ENCODE measurements at regions of chr6 and their contacts with region 1.

Region 1: GRCh38 chr6:81759782-81760181 is 7.3 kb upstream of the TENT5A start:
- DNase-seq: no peak
- ATAC-seq: no peak
- H3K4me3 ChIP-seq: no peak overlapping the region
- H3K27ac ChIP-seq: no peak overlapping the region
- H3K4me1 ChIP-seq: no peaks in the 10 kb centered on the region
- H3K27me3 ChIP-seq: peaks cover 0 to 4% of the 10 kb centered on the region in 2 experiments; a peak in 1 of 5 replicates
- CTCF ChIP-seq: no peak
- EP300 ChIP-seq: no peak
- POLR2A ChIP-seq: no peak
- RAD21 ChIP-seq: no peak

Region 2: GRCh38 chr6:81708113-81708699 is 51.6 kb before region 1 on chr6:
- CTCF ChIA-PET with region 1: no interaction called
- POLR2A ChIA-PET with region 1: no interaction called
- in situ Hi-C with region 1: no loop called
- intact Hi-C with region 1: no loop called
- DNase-seq: no peak
- ATAC-seq: no peak
- H3K4me3 ChIP-seq: no peak overlapping the region
- H3K27ac ChIP-seq: no peak overlapping the region
- H3K4me1 ChIP-seq: no peaks in the 10 kb centered on the region
- H3K27me3 ChIP-seq: no peaks in the 10 kb centered on the region
- CTCF ChIP-seq: no peak
- EP300 ChIP-seq: no peak
- POLR2A ChIP-seq: no peak
- RAD21 ChIP-seq: no peak

Region 3: DNA sequence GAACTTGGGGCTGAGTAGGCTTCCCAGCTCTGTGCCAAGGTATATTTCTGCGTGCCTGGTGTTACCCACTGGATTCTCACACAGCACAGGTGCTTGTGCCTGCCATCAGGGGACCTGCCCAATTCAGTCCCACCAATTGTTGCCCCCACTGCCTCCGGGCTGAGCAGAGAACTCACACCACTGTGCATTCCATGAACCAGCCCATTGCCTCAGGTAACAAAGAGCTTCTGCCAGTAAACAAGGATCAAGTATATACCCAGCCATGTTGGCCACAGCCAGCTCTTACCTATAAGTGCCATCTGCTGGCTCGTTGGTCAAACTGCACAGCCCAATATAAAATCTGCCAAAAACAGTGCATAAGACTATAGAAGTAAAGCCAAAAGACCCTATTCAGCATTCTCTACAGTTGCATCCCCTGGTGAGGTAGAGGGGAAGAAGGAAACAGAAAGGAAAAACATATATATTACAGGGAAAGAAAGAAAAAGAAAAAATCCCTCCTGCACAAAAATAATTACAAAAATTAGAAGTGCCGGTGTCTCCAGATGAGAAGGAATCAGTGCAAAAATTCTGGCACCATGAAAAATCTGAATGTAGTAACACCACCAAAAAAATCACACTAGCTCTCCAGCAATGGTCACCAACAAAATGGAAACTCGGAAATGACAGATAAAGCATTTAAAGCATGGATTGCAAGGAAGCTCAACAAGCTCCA is 246.4 kb after region 1 on chr6:
- CTCF ChIA-PET with region 1: no interaction called
- POLR2A ChIA-PET with region 1: no interaction called
- in situ Hi-C with region 1: no loop called
- intact Hi-C with region 1: loop called (anchors 5 kb)
- DNase-seq: peak in 1 of 4 experiments; percentile 21
- ATAC-seq: peak; percentile 79
- H3K4me3 ChIP-seq: no peak overlapping the region
- H3K27ac ChIP-seq: no peak overlapping the region
- H3K4me1 ChIP-seq: no peaks in the 10 kb centered on the region
- H3K27me3 ChIP-seq: no peaks in the 10 kb centered on the region
- CTCF ChIP-seq: peak; percentile 32 to 65 (median 60); a peak in 5 of 6 replicates
- EP300 ChIP-seq: no peak
- POLR2A ChIP-seq: no peak
- RAD21 ChIP-seq: peak; percentile 80 to 81

Measured in K562 (cell line).